Activated CD4-positive, alpha-beta memory T cell treated with anti-CD3 and anti-CD28 coated beads, Interleukin-2, amount 10 ng/mL, durations not matched to agents 7 days and 5 days (primary cell): ENCODE measurements at regions of chr1 and their contacts with region 1.

Region 1: GRCh38 chr1:206544562-206545257 is 37.4 kb downstream of the RASSF5 start:
- DNase-seq: peak; percentile 83
- H3K4me3 Mint-ChIP-seq: no peak overlapping the region
- H3K27ac Mint-ChIP-seq: no peak overlapping the region
- H3K4me1 Mint-ChIP-seq: peaks cover 17% of the 10 kb centered on the region
- H3K27me3 Mint-ChIP-seq: no peaks in the 10 kb centered on the region

Region 2: GRCh38 chr1:206469933-206470691 is 74.6 kb before region 1 on chr1 and contains the start of gene IKBKE:
- CTCF ChIA-PET with region 1: interaction called, 14 read pairs
- POLR2A ChIA-PET with region 1: no interaction called
- DNase-seq: peak; percentile 72
- H3K4me3 Mint-ChIP-seq: peak within 1 kb of the TSS; percentile 93
- H3K27ac Mint-ChIP-seq: peak within 1 kb of the TSS; percentile 77
- H3K4me1 Mint-ChIP-seq: peaks cover 86% of the 10 kb centered on the region
- H3K27me3 Mint-ChIP-seq: no peaks in the 10 kb centered on the region
- total RNA-seq, gene IKBKE: 61.8 to 63.6 TPM

Region 3: GRCh38 chr1:206489980-206490770 is 54.5 kb before region 1 on chr1:
- CTCF ChIA-PET with region 1: interaction called, 11 read pairs
- POLR2A ChIA-PET with region 1: no interaction called
- DNase-seq: peak; percentile 74
- H3K4me3 Mint-ChIP-seq: no peak overlapping the region
- H3K27ac Mint-ChIP-seq: peak overlapping the region; percentile 44
- H3K4me1 Mint-ChIP-seq: peaks cover 11% of the 10 kb centered on the region
- H3K27me3 Mint-ChIP-seq: no peaks in the 10 kb centered on the region

Region 4: DNA sequence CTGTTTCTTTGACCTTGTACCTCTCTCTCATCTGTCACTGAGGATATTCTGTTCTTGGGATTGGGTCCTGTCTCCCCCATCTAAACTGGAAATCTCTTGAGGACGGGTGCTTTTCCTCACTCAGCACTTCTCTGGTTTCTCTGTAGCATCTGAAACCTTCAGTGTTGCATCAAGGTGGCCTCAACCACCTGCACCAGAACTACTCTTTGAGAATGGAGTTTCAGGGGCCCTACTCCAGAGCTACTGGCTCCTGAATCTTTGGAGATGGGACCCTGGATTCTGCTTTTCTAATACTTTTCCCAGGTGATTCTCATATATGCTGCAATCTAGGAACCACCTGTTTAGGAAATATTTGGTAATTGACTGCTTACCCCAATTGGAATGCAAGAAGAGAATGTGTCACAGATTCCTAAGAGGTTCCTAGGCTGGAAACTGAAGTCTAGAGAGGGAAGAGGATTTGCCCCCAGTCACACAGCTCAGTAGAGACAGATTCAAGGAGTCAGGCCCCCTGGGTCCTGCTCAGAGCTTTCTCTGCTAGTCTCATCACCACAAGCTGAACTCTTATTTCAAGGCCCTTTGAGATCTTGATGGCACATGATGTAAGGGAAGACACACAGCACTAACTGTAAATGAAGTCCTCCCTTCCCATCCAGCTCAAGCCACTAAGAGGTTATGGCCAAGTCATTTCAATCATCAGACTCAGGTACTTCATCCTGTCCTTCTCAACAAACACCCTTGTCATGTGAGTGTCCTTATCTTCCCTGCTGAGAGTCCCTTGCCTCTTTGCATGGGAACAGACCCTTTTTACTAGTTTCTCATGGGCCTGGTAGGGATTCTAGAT is 18.9 kb after region 1 on chr1:
- CTCF ChIA-PET with region 1: interaction called, 119 read pairs
- POLR2A ChIA-PET with region 1: interaction called, 1,193 read pairs
- DNase-seq: no peak
- H3K4me3 Mint-ChIP-seq: peak overlapping the region; percentile 72
- H3K27ac Mint-ChIP-seq: peak overlapping the region; percentile 88
- H3K4me1 Mint-ChIP-seq: peaks cover 89% of the 10 kb centered on the region
- H3K27me3 Mint-ChIP-seq: no peaks in the 10 kb centered on the region

Region 5: DNA sequence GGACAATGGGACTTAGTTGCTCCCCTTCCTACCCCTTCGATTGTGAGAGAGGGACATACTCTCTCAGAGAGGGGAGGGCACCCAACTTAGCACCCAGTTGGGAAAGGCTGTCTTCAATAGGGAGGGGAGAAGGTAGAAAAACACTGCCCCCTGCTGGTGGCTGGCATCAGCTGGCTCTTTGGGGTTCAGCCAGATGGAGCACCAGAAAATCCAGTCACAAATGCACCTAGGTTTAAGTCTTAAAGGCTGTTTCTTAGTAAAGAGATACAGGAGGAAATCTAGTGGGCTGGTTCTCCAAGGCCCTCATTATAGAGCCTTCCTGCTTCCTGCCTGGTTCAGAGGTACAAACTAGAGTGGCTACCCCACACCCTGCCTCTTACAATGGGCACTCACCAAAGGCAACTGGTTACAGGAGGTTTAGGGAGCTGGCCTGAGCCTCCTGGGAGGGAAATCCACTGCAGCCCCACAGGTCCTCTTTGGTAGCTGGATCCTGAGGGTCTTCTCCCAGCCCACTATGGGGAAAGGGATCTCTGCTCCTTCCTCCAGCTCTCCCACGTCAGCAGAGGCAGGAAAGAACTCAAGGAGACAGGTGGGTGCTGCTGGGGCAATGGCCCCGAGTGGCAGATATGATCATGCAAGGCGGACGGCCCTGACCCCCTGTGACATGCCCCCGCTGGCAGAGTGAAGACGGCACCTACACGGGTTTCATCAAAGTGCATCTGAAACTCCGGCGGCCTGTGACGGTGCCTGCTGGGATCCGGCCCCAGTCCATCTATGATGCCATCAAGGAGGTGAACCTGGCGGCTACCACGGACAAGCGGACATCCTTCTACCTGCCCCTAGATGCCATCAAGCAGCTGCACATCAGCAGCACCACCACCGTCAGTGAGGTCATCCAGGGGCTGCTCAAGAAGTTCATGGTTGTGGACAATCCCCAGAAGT is 39.3 kb after region 1 on chr1:
- CTCF ChIA-PET with region 1: interaction called, 524 read pairs
- POLR2A ChIA-PET with region 1: interaction called, 1,193 read pairs
- DNase-seq: peak; percentile 88
- H3K4me3 Mint-ChIP-seq: peak overlapping the region; percentile 63
- H3K27ac Mint-ChIP-seq: peak overlapping the region; percentile 90
- H3K4me1 Mint-ChIP-seq: peaks cover 91% of the 10 kb centered on the region
- H3K27me3 Mint-ChIP-seq: no peaks in the 10 kb centered on the region

Region 6: GRCh38 chr1:206635080-206635977 is 90.6 kb after region 1 on chr1 and contains the start of gene DYRK3:
- CTCF ChIA-PET with region 1: interaction called, 25 read pairs
- POLR2A ChIA-PET with region 1: no interaction called
- DNase-seq: peak; percentile 95
- H3K4me3 Mint-ChIP-seq: peak within 1 kb of the TSS; percentile 80
- H3K27ac Mint-ChIP-seq: peak within 1 kb of the TSS; percentile 80
- H3K4me1 Mint-ChIP-seq: peaks cover 36% of the 10 kb centered on the region
- H3K27me3 Mint-ChIP-seq: peaks cover 23% of the 10 kb centered on the region
- total RNA-seq, gene DYRK3: 8.8 to 9.2 TPM